PC-9 (cell line): ENCODE measurements at regions of chr4 and their contacts with region 1.

Region 1: GRCh38 chr4:139530833-139531427 is 25.1 kb downstream of the SETD7 start:
- DNase-seq: no peak
- H3K4me3 ChIP-seq: no peak overlapping the region
- H3K27ac ChIP-seq: no peak overlapping the region
- H3K4me1 ChIP-seq: no peaks in the 10 kb centered on the region
- H3K27me3 ChIP-seq: no peaks in the 10 kb centered on the region
- CTCF ChIP-seq: peak; percentile 53; the same call in 1 of the 2 replicates

Region 2: GRCh38 chr4:139403462-139403861 is 127.5 kb before region 1 on chr4:
- CTCF ChIA-PET with region 1: no interaction called
- POLR2A ChIA-PET with region 1: no interaction called
- intact Hi-C with region 1: loop called (anchors 10 kb)
- DNase-seq: no peak
- H3K4me3 ChIP-seq: no peak overlapping the region
- H3K27ac ChIP-seq: no peak overlapping the region
- H3K4me1 ChIP-seq: no peaks in the 10 kb centered on the region
- H3K27me3 ChIP-seq: no peaks in the 10 kb centered on the region
- CTCF ChIP-seq: no peak

Region 3: GRCh38 chr4:139593091-139593564 is 62.2 kb after region 1 on chr4:
- CTCF ChIA-PET with region 1: no interaction called
- POLR2A ChIA-PET with region 1: interaction called, 16 read pairs
- intact Hi-C with region 1: no loop called
- DNase-seq: no peak
- H3K4me3 ChIP-seq: no peak overlapping the region
- H3K27ac ChIP-seq: no peak overlapping the region
- H3K4me1 ChIP-seq: peaks cover 28% of the 10 kb centered on the region
- H3K27me3 ChIP-seq: no peaks in the 10 kb centered on the region
- CTCF ChIP-seq: no peak

Region 4: GRCh38 chr4:139665690-139666529 is 135.0 kb after region 1 on chr4 and contains the start of gene MGST2:
- CTCF ChIA-PET with region 1: no interaction called
- POLR2A ChIA-PET with region 1: interaction called, 14 read pairs
- intact Hi-C with region 1: no loop called
- DNase-seq: peak; percentile 65 to 75
- H3K4me3 ChIP-seq: peak within 1 kb of the TSS; percentile 56
- H3K27ac ChIP-seq: peak within 1 kb of the TSS; percentile 82
- H3K4me1 ChIP-seq: peaks cover 22% of the 10 kb centered on the region
- H3K27me3 ChIP-seq: no peaks in the 10 kb centered on the region
- CTCF ChIP-seq: no peak
- total RNA-seq, gene MGST2: 53.7 and 81.8 TPM in 2 replicates